ENCODE measurements at regions of chr9 and their contacts with region 1.

Region 1: DNA sequence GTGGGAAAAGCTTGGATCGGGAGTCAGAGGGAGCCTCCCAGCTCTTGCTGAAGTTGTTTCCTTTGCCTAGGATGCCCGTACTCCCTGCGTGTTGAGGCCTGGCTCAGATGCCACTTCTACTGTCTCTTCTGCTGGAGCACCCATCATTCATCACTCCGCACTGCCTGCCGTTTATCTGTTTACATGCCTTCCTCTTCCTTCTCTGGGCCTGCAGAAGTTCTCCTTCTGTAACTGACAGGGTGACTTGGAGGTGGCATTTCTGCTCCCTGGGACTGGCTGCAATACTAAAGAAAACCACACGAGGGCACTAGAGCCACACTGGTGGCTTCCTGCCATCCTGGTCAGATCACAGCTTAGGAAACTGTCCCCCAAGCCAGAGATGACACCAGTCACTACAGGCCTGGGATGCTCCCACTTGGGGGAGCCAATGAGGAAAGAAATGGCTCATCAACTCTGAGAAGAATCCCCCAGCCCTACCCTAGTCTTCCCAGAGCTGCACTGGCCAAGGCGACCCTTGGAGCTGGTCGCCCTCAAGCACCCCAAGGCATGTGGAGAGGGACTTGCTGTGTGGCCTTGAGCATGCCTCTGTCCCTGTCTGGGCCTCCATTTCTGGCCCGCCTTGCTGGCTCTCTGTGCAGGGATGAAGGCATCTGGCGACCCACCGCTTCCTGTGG is 9.7 kb upstream of the SLC25A51 start:
- DNase-seq: peak; percentile 84
- H3K4me3 ChIP-seq: no peak overlapping the region
- H3K27ac ChIP-seq: no peak overlapping the region
- H3K4me1 ChIP-seq: peaks cover 17% of the 10 kb centered on the region
- H3K27me3 ChIP-seq: no peaks in the 10 kb centered on the region
- CTCF ChIP-seq: peak; percentile 89 to 92
- POLR2A ChIP-seq: no peak

Region 2: GRCh38 chr9:37938121-37938891 is 24.7 kb after region 1 on chr9:
- CTCF ChIA-PET with region 1: interaction called, 23 read pairs
- POLR2A ChIA-PET with region 1: interaction called, 3 read pairs
- dilution Hi-C with region 1: no loop called
- intact Hi-C with region 1: loop called (anchors 1 kb)
- DNase-seq: peak; percentile 90
- H3K4me3 ChIP-seq: no peak overlapping the region
- H3K27ac ChIP-seq: peak overlapping the region; percentile 77
- H3K4me1 ChIP-seq: peaks cover 39% of the 10 kb centered on the region
- H3K27me3 ChIP-seq: no peaks in the 10 kb centered on the region
- CTCF ChIP-seq: no peak
- POLR2A ChIP-seq: no peak

Region 3: GRCh38 chr9:37963936-37964739 is 50.5 kb after region 1 on chr9:
- CTCF ChIA-PET with region 1: interaction called, 12 read pairs
- POLR2A ChIA-PET with region 1: no interaction called
- dilution Hi-C with region 1: no loop called
- intact Hi-C with region 1: loop called (anchors 2 kb)
- DNase-seq: peak; percentile 94
- H3K4me3 ChIP-seq: no peak overlapping the region
- H3K27ac ChIP-seq: peak overlapping the region; percentile 67
- H3K4me1 ChIP-seq: peaks cover 41% of the 10 kb centered on the region
- H3K27me3 ChIP-seq: no peaks in the 10 kb centered on the region
- CTCF ChIP-seq: no peak
- POLR2A ChIP-seq: no peak

Region 4: GRCh38 chr9:38026021-38026809 is 112.6 kb after region 1 on chr9:
- CTCF ChIA-PET with region 1: interaction called, 14 read pairs
- POLR2A ChIA-PET with region 1: no interaction called
- dilution Hi-C with region 1: no loop called
- intact Hi-C with region 1: no loop called
- DNase-seq: peak; percentile 98
- H3K4me3 ChIP-seq: no peak overlapping the region
- H3K27ac ChIP-seq: peak overlapping the region; percentile 97
- H3K4me1 ChIP-seq: peaks cover 35% of the 10 kb centered on the region
- H3K27me3 ChIP-seq: no peaks in the 10 kb centered on the region
- CTCF ChIP-seq: no peak
- POLR2A ChIP-seq: no peak

Region 5: DNA sequence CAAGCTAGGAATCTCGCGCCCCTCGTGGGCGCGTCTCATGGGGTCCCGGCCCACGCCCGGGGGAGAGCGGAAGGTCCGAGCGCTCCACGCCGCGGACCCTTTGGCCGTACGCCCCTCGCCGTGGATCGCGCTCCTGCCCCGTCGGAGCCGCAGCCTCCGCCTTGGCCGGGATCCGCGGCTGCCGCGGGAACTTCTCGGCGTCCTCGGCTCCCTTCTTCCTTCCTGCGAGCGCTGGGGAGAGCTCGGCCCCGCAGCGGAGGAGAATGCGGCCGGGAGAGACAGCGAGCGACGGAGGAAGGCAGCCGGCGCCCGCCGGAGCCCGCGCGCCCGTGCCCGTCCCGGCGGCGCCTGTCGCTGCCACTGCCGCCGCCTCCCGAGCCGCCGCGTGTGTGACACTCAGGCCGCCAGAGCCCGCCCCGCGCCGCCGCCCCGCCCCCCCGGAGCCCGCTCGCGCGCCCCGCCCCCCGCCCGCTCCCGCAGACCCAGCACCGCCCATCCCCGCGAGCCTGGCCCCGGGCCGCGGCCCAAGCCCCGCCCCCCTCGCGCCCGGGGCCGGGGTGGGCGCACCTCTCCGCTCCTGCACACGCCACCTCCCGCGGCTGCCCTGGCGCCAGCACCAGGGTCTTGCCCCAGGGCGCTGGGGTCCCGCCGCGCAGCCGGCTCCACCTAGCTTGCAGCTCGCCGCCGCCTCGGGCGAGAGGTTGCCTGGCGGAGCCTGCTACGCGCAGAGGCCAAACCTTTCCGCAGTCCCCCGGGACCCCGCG is 155.4 kb after region 1 on chr9 and contains the start of gene SHB:
- CTCF ChIA-PET with region 1: interaction called, 82 read pairs
- POLR2A ChIA-PET with region 1: interaction called, 4 read pairs
- dilution Hi-C with region 1: no loop called
- intact Hi-C with region 1: loop called (anchors 1 kb)
- DNase-seq: peak; percentile 63
- H3K4me3 ChIP-seq: peak within 1 kb of the TSS; percentile 63 to 76 (median 71)
- H3K27ac ChIP-seq: peak within 1 kb of the TSS; percentile 92
- H3K4me1 ChIP-seq: peaks cover 47% of the 10 kb centered on the region
- H3K27me3 ChIP-seq: no peaks in the 10 kb centered on the region
- CTCF ChIP-seq: peak in 1 of 2 donors; percentile 0
- POLR2A ChIP-seq: peak; percentile 84
- total RNA-seq, gene SHB: 22.3 and 24.9 TPM in 2 replicates

Region 6: DNA sequence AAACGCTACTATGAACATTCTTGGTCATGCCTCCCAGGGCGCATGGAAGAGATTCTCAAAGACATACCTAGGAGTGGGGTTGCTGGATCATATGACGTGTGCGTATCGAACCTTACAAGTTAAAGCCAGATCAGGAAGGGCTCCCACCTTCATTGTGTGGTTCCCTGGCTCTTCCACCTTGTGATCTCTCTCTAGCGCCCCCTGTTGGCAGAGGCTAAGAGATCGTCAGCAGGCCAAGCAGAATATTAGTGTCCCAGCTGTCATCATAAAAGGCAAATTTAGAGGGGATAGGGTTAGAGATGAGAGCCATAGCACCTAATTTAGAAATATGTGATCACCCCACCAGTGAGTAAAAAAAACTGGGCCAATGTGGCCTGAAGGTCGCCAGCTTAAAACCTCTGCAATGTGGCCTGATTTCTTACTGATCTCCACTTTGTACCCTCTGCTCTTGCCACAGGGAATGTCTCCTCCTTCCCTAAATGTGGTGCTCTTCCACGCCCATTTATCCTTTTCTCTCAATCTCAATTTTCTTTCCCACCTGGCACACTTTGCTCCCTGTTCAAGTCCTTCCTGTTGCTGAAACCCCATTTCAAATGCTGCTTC is 247.1 kb after region 1 on chr9:
- CTCF ChIA-PET with region 1: interaction called, 130 read pairs
- POLR2A ChIA-PET with region 1: no interaction called
- dilution Hi-C with region 1: no loop called
- intact Hi-C with region 1: loop called (anchors 1 kb)
- DNase-seq: peak; percentile 49
- H3K4me3 ChIP-seq: no peak overlapping the region
- H3K27ac ChIP-seq: no peak overlapping the region
- H3K4me1 ChIP-seq: no peaks in the 10 kb centered on the region
- H3K27me3 ChIP-seq: no peaks in the 10 kb centered on the region
- CTCF ChIP-seq: peak; percentile 77 to 86
- POLR2A ChIP-seq: no peak

Region 7: GRCh38 chr9:38405785-38406184 is 492.2 kb after region 1 on chr9:
- CTCF ChIA-PET with region 1: interaction called, 15 read pairs
- POLR2A ChIA-PET with region 1: no interaction called
- dilution Hi-C with region 1: no loop called
- intact Hi-C with region 1: no loop called
- DNase-seq: no peak
- H3K4me3 ChIP-seq: no peak overlapping the region
- H3K27ac ChIP-seq: no peak overlapping the region
- H3K4me1 ChIP-seq: no peaks in the 10 kb centered on the region
- H3K27me3 ChIP-seq: peaks cover 8 to 11% of the 10 kb centered on the region in 2 experiments
- CTCF ChIP-seq: no peak
- POLR2A ChIP-seq: no peak